ENCODE measurements at regions of chr13 and their contacts with region 1.

Region 1: DNA sequence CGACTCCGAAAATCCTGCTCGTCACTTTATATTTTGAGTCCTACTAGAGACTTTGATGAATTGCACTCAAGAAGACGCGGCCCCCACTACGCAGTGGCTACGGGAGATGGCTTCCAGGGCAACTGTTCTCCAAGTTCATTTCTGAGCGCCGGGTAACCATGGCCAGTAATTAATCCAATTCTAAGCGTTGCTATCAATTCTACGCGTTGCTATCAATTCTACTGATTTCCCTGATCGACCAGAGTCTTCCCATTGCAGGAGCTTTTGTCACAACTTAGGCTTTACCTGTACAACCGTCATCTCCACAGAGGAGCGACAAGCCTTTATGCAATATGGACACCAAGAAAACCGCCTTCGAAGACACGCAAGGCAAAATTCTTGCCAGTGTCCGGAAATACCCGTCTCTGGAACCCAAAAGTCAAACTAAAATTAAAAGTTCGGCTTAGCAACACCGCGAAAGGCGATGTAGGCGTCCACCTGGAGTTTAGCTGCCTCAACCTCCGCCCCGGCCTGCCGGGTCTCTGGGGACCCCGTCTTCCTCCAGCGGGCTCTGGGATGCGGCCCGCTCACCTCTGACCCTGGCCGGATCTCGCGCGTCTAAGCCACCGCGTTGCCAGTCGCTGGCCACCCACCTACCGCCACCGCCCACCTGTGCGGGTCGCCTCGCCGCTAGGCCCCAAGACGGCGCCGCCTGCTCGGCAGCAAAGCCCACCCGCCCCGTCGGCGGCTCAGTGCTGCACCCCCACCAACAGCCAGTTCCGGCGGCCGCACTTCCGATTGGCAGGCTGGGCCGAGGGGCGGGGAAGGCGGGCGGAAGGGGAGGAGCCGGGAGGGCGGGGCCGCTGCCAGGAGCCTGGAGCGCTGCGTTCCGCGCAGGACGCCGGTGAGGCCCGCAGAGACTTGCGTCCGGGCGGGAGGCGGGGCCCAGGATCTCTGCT is at the start of gene SUPT20H:
- DNase-seq: peak; percentile 89 to 92 (median 90)
- H3K4me3 ChIP-seq: peak within 1 kb of the TSS; percentile 72 to 77
- H3K4me3 Mint-ChIP-seq: peak within 1 kb of the TSS; percentile 91 to 97 (median 96)
- H3K27ac ChIP-seq: peak within 1 kb of the TSS; percentile 95
- H3K27ac Mint-ChIP-seq: peak within 1 kb of the TSS; percentile 98 to 99 (median 99)
- H3K4me1 ChIP-seq: peaks cover 23% of the 10 kb centered on the region
- H3K4me1 Mint-ChIP-seq: peaks cover 14 to 56% (median 29%) of the 10 kb centered on the region in 4 donors
- H3K27me3 ChIP-seq: no peaks in the 10 kb centered on the region
- H3K27me3 Mint-ChIP-seq: no peaks in the 10 kb centered on the region
- total RNA-seq, gene SUPT20H: 104 to 105 TPM

Region 2: DNA sequence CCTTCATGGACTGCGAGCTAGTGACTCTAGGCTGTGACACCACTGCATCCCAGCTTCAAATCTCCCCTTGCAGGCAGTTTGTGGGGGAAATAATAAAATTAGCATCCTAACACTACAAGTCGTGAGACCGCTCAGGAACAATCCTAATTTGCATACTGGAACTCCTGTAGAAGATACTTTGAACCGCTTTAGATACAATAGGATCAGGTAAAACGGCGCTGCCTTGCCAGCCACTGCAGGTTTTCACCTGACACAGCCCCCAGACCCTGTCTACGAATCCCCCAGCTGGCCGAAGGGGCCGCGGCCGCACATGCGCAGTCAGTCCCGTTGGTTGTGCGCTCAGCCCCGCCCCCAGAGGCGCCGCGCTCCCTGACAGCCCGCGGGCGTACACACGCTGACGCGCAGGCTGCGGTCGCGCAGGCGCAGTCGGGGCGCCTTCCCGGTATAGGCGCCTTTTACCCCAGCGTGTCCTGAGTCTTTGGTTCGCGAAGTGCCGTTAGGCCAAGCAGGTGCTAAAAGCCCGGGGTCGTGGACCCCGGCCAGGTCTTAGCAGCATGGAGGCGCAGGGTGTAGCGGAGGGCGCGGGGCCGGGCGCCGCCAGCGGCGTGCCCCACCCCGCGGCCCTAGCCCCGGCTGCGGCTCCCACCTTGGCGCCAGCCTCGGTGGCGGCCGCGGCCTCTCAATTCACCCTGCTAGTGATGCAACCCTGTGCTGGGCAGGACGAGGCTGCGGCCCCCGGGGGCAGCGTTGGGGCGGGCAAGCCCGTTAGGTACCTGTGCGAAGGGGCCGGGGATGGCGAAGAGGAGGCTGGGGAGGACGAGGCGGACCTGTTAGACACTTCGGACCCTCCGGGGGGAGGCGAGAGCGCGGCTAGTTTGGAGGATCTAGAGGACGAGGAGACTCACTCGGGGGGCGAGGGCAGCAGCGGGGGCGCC is 240.1 kb before region 1 on chr13 and contains the start of gene RFXAP:
- CTCF ChIA-PET with region 1: no interaction called
- POLR2A ChIA-PET with region 1: no interaction called
- intact Hi-C with region 1: loop called (anchors 2 kb)
- DNase-seq: peak; percentile 87 to 92 (median 90)
- H3K4me3 ChIP-seq: peak within 1 kb of the TSS; percentile 76 to 86
- H3K4me3 Mint-ChIP-seq: peak within 1 kb of the TSS; percentile 91 to 97 (median 95)
- H3K27ac ChIP-seq: peak within 1 kb of the TSS; percentile 85
- H3K27ac Mint-ChIP-seq: peak within 1 kb of the TSS; percentile 85 to 96 (median 95)
- H3K4me1 ChIP-seq: peaks cover 46% of the 10 kb centered on the region
- H3K4me1 Mint-ChIP-seq: peaks cover 33 to 56% (median 42%) of the 10 kb centered on the region in 4 donors
- H3K27me3 ChIP-seq: no peaks in the 10 kb centered on the region
- H3K27me3 Mint-ChIP-seq: peaks cover 0 to 8% of the 10 kb centered on the region in 2 donors
- total RNA-seq, gene RFXAP: 8.8 to 9.9 TPM

Region 3: DNA sequence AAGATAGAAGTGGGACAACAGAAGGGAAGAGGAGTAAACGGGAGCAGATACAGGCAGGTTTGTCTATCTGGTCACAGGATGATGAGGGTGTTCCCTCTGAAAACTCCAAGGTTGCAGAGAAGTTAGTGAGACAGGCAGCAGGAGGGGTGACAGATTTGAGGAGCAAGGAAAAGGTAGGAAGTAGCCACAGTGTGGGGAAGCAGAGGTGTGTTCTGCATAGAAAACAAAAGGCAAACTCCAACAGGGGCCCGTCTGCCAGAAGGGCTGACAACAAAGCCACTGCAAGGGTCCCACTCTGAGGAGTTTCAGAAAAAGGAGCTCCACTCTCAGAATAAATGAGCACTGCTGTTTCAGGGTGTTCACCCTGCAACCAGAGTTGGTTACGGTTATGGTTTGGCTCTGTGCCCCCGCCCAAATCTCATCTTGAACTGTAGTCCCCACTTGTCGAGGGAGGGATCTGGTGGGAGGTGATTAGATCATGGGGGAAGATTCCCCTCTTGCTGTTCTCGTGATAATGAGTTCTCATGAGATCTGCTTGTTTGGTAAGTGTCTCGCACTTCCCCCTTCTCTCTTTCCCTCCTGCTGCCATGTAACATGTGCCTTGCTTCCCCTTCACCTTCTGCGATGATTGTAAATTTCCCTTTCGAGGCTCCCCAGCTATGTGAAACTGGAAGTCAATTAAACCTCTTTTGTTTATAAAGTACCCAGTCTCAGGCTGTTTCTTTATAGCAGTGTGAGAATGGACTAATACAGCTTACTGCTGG is 171.2 kb before region 1 on chr13:
- CTCF ChIA-PET with region 1: no interaction called
- POLR2A ChIA-PET with region 1: no interaction called
- intact Hi-C with region 1: no loop called
- DNase-seq: no peak
- H3K4me3 ChIP-seq: no peak overlapping the region
- H3K4me3 Mint-ChIP-seq: no peak overlapping the region
- H3K27ac ChIP-seq: no peak overlapping the region
- H3K27ac Mint-ChIP-seq: no peak overlapping the region
- H3K4me1 ChIP-seq: no peaks in the 10 kb centered on the region
- H3K4me1 Mint-ChIP-seq: no peaks in the 10 kb centered on the region
- H3K27me3 ChIP-seq: no peaks in the 10 kb centered on the region
- H3K27me3 Mint-ChIP-seq: peaks cover 15 to 21% of the 10 kb centered on the region in 2 donors

Region 4: DNA sequence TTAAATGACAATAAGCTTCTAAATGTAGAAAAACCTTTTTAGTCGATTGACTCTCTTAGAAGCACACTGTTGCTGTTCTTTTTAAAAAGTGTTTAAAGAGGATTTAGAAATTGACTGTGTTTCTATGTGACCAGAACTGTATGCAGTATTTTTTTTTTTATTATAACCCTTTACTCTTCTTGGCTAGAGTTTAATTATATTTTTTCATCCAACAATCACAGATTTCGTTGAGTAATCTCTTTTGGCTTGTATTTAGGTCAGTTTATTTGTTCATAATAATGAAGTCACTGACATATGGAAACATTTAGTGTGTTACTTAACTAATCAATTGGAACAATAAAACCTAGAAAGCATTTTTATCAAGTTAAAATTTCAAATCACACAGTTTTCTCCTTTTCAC is 26.4 kb after region 1 on chr13:
- CTCF ChIA-PET with region 1: no interaction called
- POLR2A ChIA-PET with region 1: no interaction called
- intact Hi-C with region 1: no loop called
- DNase-seq: no peak
- H3K4me3 ChIP-seq: no peak overlapping the region
- H3K4me3 Mint-ChIP-seq: no peak overlapping the region
- H3K27ac ChIP-seq: no peak overlapping the region
- H3K27ac Mint-ChIP-seq: no peak overlapping the region
- H3K4me1 ChIP-seq: no peaks in the 10 kb centered on the region
- H3K4me1 Mint-ChIP-seq: no peaks in the 10 kb centered on the region
- H3K27me3 ChIP-seq: no peaks in the 10 kb centered on the region
- H3K27me3 Mint-ChIP-seq: peaks cover 5 to 11% of the 10 kb centered on the region in 2 donors

Region 5: DNA sequence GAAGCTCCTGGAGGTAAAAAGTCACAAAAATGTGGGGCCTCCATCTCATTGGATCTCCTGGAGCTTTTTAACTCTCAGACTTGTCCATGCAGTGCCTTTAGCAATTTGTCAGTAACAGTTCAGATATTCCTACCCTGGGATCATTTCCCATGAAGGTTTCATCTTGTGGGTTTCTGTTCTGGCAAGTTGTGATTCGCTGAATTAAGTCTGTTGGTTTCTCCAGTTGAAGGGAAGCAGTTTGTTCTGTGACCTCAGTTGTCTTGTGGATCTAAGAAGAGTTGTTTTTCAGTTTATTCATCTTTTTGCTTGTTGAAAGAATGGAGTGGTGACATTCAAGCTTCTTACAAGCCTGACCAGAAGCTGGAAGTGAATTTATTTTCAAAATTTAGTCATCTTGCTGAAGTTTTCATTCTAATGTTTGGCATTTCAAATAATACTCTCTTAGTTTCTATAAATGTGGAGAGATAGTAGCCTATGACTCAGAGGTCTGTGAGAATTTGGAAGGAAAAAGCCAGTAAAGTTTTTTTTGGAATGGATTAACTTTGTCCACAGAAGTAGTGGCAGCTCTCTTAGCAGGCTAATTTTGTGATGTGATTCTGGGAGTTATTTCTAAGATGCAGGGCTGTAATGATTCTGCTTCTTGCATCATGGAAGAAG is 166.4 kb after region 1 on chr13:
- CTCF ChIA-PET with region 1: no interaction called
- POLR2A ChIA-PET with region 1: no interaction called
- intact Hi-C with region 1: no loop called
- DNase-seq: no peak
- H3K4me3 ChIP-seq: no peak overlapping the region
- H3K4me3 Mint-ChIP-seq: no peak overlapping the region
- H3K27ac ChIP-seq: no peak overlapping the region
- H3K27ac Mint-ChIP-seq: no peak overlapping the region
- H3K4me1 ChIP-seq: no peaks in the 10 kb centered on the region
- H3K4me1 Mint-ChIP-seq: no peaks in the 10 kb centered on the region
- H3K27me3 ChIP-seq: no peaks in the 10 kb centered on the region
- H3K27me3 Mint-ChIP-seq: no peaks in the 10 kb centered on the region

Region 6: DNA sequence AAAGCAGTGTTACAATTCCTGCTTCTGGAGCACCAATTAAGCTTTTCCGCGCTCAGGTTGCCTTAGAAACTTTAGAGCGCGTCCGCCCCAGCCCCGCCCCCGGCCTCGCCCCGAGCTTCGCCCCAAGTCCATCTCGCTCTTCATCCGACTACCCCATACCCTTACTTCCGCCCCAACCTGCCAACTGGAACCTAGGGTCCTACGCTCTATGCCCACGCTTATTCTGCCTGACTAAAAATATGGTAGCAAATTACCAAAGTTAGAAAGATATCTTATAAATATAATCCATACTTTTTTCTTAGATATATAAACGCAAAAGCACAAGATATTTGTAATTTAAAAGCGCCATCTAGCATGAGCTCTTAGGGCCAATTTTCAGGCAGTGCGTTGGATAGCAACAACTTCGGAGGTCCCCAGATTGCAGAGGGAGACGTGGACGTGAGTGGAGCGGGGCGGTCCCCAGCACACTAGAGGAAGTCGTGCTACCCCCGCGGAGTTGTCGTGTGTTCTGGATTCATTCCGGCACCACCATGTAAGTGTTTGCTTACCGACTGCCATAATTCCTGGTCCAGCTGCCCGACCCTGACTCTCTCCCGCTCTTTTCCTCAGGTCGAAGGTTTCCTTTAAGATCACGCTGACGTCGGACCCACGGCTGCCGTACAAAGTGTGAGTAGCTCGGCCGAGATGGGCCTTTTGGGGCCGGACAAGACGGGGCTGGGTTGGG is 1290.4 kb after region 1 on chr13 and contains the start of gene UFM1:
- CTCF ChIA-PET with region 1: no interaction called
- POLR2A ChIA-PET with region 1: no interaction called
- intact Hi-C with region 1: loop called (anchors 1 kb)
- DNase-seq: peak; percentile 90 to 94 (median 92)
- H3K4me3 ChIP-seq: peak within 1 kb of the TSS; percentile 75 to 87
- H3K4me3 Mint-ChIP-seq: peak within 1 kb of the TSS; percentile 95 to 99 (median 98)
- H3K27ac ChIP-seq: peak within 1 kb of the TSS; percentile 90
- H3K27ac Mint-ChIP-seq: peak within 1 kb of the TSS; percentile 97 to 99 (median 98)
- H3K4me1 ChIP-seq: peaks cover 31% of the 10 kb centered on the region
- H3K4me1 Mint-ChIP-seq: peaks cover 26 to 42% (median 35%) of the 10 kb centered on the region in 4 donors
- H3K27me3 ChIP-seq: no peaks in the 10 kb centered on the region
- H3K27me3 Mint-ChIP-seq: peaks cover 0 to 2% of the 10 kb centered on the region in 2 donors
- total RNA-seq, gene UFM1: 81.8 to 82.1 TPM

Measured in CD4-positive, alpha-beta memory T cell (primary cell).